HCT116 (cell line): ENCODE measurements at regions of chr1 and their contacts with region 1.

Region 1: GRCh38 chr1:168396940-168397698 is 116.4 kb downstream of the TBX19 start:
- DNase-seq: no peak
- ATAC-seq: peak; percentile 41; the same call in 1 of the 2 replicates
- H3K4me3 ChIP-seq: no peak overlapping the region
- H3K27ac ChIP-seq: peak overlapping the region; percentile 40
- H3K4me1 ChIP-seq: peaks cover 50 to 61% of the 10 kb centered on the region in 2 experiments
- H3K27me3 ChIP-seq: no peaks in the 10 kb centered on the region
- CTCF ChIP-seq: no peak
- POLR2A ChIP-seq: no peak
- RAD21 ChIP-seq: no peak

Region 2: GRCh38 chr1:168187177-168187576 is 209.9 kb before region 1 on chr1:
- CTCF ChIA-PET with region 1: no interaction called
- POLR2A ChIA-PET with region 1: no interaction called
- RAD21 ChIA-PET with region 1: no interaction called
- intact Hi-C with region 1: no loop called
- DNase-seq: no peak
- ATAC-seq: no peak
- H3K4me3 ChIP-seq: no peak overlapping the region
- H3K27ac ChIP-seq: no peak overlapping the region
- H3K4me1 ChIP-seq: peaks cover 0 to 3% of the 10 kb centered on the region in 2 experiments; a peak in 2 of 4 replicates
- H3K27me3 ChIP-seq: no peaks in the 10 kb centered on the region
- CTCF ChIP-seq: no peak
- POLR2A ChIP-seq: no peak
- RAD21 ChIP-seq: no peak

Region 3: GRCh38 chr1:168407832-168408535 is 10.9 kb after region 1 on chr1:
- CTCF ChIA-PET with region 1: no interaction called
- POLR2A ChIA-PET with region 1: interaction called, 11 read pairs
- RAD21 ChIA-PET with region 1: no interaction called
- intact Hi-C with region 1: no loop called
- DNase-seq: no peak
- ATAC-seq: peak; percentile 14
- H3K4me3 ChIP-seq: peak overlapping the region; percentile 10 to 30; a peak in 3 of 4 replicates
- H3K27ac ChIP-seq: peak overlapping the region; percentile 95
- H3K4me1 ChIP-seq: peaks cover 54 to 74% of the 10 kb centered on the region in 2 experiments
- H3K27me3 ChIP-seq: no peaks in the 10 kb centered on the region
- CTCF ChIP-seq: no peak
- POLR2A ChIP-seq: no peak
- RAD21 ChIP-seq: no peak